AG04449 (cell line): ENCODE measurements at regions of chr2 and their contacts with region 1.

Region 1: DNA sequence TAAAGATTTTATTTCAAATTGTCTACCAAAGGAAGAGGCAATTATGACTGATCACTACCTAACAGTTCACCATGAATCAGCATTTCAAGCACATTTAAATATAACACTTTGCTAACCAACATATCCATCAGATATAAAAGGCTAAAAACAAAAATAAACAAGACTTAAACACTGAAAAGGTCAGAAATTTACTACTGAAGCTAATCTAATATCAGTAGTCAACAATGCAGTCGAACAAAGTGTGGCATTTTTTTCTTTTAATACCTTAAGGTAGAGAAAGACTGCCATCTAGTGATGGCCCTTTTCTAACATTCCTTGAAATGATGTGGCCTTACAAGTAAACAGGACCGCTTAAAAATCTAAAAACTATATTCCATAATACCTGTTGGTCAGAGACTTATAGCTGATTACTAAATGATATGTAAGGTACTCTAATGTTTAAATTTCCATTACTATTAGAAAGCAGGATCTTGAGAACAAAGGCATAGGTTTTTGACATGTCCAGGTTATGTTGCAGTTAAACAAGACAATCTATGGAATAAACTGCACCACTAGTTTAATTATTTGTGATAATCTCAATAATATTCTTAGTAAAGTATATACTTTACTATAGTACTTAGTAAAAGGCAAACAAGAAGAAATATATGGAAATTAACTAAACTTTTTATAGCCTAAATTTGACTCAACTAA is 80.0 kb downstream of the EXOC6B start:
- DNase-seq: no peak
- H3K4me3 ChIP-seq: no peak overlapping the region
- CTCF ChIP-seq: peak; percentile 49

Region 2: DNA sequence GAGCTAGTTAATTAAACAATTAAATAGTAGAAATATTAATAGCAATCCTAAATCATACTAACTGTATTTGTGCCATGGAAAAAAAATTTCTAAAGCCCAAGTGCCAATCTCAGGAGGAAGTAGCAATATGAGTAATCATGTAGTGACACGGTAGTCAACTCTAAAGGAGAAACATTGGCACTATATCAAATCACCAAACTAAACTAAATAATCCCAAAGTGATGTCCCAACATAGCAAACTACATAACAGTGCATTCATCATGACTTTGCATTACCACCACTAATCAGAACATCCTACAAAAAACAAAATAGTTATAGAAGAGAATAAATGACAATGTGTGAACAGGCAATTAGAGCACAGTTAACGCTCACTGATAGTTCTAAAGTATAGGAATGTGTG is 115.1 kb before region 1 on chr2:
- CTCF ChIA-PET with region 1: no interaction called
- POLR2A ChIA-PET with region 1: no interaction called
- DNase-seq: no peak
- H3K4me3 ChIP-seq: no peak overlapping the region
- CTCF ChIP-seq: no peak

Region 3: GRCh38 chr2:72731116-72731515 is 14.7 kb before region 1 on chr2:
- CTCF ChIA-PET with region 1: interaction called, 30 read pairs
- POLR2A ChIA-PET with region 1: no interaction called
- DNase-seq: no peak
- H3K4me3 ChIP-seq: no peak overlapping the region
- CTCF ChIP-seq: no peak

Region 4: DNA sequence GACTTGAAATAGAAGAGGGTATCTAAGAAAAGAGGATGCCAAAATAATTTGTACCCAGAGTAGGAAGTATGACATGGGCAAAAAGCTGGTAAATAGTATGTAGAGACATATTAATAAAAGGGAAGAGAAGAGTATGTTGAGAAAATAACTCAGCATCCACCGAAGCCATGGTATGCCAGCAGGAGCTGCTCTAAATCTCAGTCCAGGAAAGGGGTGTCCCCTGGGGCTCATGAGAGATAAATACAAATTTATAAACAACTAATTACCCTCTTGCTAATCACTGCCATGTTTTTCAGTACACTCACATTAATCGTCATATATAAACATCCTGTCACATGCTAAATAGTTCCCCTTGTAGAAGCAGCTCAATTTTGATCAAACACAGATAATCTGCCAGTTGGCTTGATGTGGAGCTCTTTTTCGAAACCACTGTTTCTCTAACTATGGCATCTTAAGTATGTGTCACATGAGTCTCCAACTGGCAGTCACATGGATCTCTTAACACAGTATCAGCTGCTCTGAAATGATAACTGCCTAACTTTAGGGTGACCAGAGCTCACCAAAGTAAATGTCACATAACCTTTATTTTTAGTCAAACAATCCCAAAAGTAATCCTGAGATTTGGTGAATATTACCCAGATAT is 48.1 kb after region 1 on chr2:
- CTCF ChIA-PET with region 1: no interaction called
- POLR2A ChIA-PET with region 1: no interaction called
- DNase-seq: no peak
- H3K4me3 ChIP-seq: no peak overlapping the region
- CTCF ChIP-seq: no peak

Region 5: DNA sequence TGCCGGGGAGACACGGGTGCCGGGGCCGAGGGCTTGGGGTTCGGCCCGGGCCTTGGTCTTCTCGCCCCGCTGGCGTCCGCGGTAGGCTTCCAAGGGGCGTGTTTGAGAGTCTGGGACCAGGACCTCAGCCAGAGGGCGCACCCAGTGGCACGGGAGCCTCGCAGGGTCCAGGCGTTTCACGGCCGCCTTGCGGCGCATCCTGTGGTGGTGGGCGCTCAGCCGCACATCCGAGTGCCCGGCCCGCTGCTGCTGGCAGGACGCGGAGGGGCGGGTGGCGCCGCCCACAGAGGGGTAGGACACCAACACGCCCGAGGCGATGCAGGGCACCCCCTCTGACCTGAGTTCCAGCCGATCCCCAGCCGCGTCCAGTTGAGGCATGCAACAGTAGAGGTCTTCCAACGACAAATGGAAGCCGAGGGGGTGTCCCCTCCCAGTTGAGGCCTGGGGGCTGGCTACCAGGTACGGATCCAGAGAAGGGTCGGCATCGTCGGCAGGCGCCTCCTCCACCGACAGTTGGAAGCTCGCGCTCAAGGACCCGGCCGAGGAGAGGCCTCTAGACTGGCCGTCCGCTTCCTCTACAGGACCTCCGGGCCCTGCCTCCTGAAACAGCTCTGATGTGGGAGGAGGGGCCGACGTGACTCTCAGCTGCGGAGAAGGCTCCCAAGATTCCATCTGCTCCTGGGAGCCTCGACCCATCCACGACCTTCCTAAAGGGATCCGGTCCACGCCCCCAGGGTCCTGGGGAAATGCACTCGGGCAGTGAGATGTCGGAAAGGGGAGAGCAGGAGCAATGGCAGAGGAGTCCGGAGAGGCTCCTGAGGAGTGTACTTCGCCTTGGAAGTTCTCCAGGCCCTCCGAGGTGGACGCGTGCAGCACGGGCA is 1669.3 kb after region 1 on chr2:
- CTCF ChIA-PET with region 1: no interaction called
- POLR2A ChIA-PET with region 1: no interaction called
- DNase-seq: no peak
- H3K4me3 ChIP-seq: peak overlapping the region; percentile 43
- CTCF ChIP-seq: peak; percentile 31